Ovary (tissue), 10 donors: ENCODE measurements at regions of chr9 and their contacts with region 1.

Region 1: DNA sequence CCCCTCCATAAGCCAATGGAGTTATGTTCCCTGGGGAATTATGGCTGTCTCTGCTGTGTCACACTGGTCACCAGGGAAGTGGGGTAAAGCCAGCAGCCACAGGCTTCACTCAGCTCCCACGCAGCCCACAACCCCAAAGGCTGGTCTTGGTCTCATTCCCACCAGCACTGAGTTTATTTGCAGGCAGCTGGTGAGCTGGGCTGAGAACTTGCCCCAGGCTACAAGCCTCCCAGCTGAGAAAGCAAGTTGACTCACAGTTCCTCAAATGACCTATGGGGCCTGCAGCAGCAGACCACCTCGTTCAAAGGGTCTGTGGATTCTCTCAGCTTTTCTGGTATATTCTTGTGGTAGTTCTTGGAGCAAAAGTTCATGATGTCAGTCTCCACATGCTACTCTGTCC is 468.4 kb downstream of the ELAVL2 start:
- DNase-seq: no peak
- H3K4me3 ChIP-seq: no peak overlapping the region
- H3K27ac ChIP-seq: no peak overlapping the region
- H3K4me1 ChIP-seq: no peaks in the 10 kb centered on the region
- H3K27me3 ChIP-seq: no peaks in the 10 kb centered on the region
- CTCF ChIP-seq: no peak
- EP300 ChIP-seq: no peak
- POLR2A ChIP-seq: no peak

Region 2: GRCh38 chr9:21479152-21479702 is 1878.4 kb before region 1 on chr9:
- intact Hi-C with region 1: loop called in 1 of 4 experiments (anchors 5 kb)
- DNase-seq: no peak
- H3K4me3 ChIP-seq: no peak overlapping the region
- H3K27ac ChIP-seq: no peak overlapping the region
- H3K4me1 ChIP-seq: no peaks in the 10 kb centered on the region
- H3K27me3 ChIP-seq: no peaks in the 10 kb centered on the region
- CTCF ChIP-seq: no peak
- EP300 ChIP-seq: no peak
- POLR2A ChIP-seq: no peak

Region 3: DNA sequence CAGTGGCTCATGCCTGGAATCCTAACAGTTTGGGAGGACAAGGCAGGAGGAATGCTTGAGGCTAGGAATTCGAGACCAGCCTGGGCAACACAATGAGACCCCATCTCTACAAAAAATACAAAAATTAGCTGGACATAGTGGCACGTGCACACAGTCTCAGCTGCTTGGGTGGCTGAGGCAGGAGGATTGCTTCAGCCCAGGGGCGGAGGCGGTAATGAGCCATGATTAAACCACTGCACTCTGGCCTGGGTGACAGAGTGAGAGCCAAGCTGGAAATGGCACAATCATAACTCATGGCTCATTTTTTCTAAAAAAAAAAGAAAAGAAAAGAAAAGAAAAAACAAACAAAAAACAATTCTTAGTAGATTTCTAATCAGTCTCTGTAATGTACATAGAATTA is 22.2 kb after region 1 on chr9:
- intact Hi-C with region 1: loop called in 1 of 4 experiments (anchors 1 kb)
- DNase-seq: no peak
- H3K4me3 ChIP-seq: no peak overlapping the region
- H3K27ac ChIP-seq: no peak overlapping the region
- H3K4me1 ChIP-seq: peaks cover 2% of the 10 kb centered on the region
- H3K27me3 ChIP-seq: no peaks in the 10 kb centered on the region
- CTCF ChIP-seq: no peak
- EP300 ChIP-seq: no peak
- POLR2A ChIP-seq: no peak